ENCODE measurements at regions of chr12 and their contacts with region 1.

Region 1: GRCh38 chr12:57213058-57213715 is 3.4 kb upstream of the NXPH4 start:
- DNase-seq: peak; percentile 42
- H3K4me3 ChIP-seq: no peak overlapping the region
- H3K27me3 ChIP-seq: peaks cover 4% of the 10 kb centered on the region; the same call in 1 of the 2 replicates
- CTCF ChIP-seq: peak; percentile 97

Region 2: DNA sequence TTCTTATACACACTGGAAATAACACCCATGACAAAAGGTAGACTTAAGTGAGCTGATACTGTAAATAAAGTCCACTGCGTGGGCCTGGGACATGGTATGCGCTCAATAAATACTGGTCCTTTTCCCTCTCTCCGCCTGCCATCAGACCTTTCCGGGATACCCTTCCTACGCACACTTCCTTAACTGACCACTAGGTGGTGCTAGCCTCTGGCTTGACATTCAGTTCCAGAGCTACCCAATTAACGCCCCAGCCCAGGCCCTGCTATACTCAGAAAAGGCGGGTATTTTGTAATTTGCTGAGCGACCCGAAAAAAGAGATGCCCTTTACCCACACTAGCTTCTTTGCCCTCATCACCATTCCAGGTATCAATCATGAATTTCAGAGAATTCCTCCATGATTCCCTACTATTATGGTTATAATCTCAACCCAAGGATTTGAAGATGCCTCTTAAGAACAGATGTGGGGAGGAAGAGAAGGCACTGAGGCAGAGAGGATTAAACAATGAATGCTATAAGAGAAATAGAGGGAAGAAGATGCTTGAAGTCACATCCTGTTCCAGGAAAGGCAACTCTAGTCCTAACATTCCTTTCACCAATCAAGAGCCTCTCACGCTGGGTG is 88.8 kb before region 1 on chr12:
- CTCF ChIA-PET with region 1: interaction called, 21 read pairs
- POLR2A ChIA-PET with region 1: no interaction called
- DNase-seq: no peak
- H3K4me3 ChIP-seq: no peak overlapping the region
- H3K27me3 ChIP-seq: no peaks in the 10 kb centered on the region
- CTCF ChIP-seq: peak; percentile 97

Region 3: GRCh38 chr12:57157588-57158173 is 55.5 kb before region 1 on chr12:
- CTCF ChIA-PET with region 1: no interaction called
- POLR2A ChIA-PET with region 1: no interaction called
- DNase-seq: no peak
- H3K4me3 ChIP-seq: no peak overlapping the region
- H3K27me3 ChIP-seq: no peaks in the 10 kb centered on the region
- CTCF ChIP-seq: no peak

Region 4: GRCh38 chr12:57175428-57176138 is 37.6 kb before region 1 on chr12:
- CTCF ChIA-PET with region 1: interaction called, 17 read pairs
- POLR2A ChIA-PET with region 1: interaction called, 3 read pairs
- DNase-seq: no peak
- H3K4me3 ChIP-seq: no peak overlapping the region
- H3K27me3 ChIP-seq: no peaks in the 10 kb centered on the region
- CTCF ChIP-seq: peak; percentile 89

Region 5: DNA sequence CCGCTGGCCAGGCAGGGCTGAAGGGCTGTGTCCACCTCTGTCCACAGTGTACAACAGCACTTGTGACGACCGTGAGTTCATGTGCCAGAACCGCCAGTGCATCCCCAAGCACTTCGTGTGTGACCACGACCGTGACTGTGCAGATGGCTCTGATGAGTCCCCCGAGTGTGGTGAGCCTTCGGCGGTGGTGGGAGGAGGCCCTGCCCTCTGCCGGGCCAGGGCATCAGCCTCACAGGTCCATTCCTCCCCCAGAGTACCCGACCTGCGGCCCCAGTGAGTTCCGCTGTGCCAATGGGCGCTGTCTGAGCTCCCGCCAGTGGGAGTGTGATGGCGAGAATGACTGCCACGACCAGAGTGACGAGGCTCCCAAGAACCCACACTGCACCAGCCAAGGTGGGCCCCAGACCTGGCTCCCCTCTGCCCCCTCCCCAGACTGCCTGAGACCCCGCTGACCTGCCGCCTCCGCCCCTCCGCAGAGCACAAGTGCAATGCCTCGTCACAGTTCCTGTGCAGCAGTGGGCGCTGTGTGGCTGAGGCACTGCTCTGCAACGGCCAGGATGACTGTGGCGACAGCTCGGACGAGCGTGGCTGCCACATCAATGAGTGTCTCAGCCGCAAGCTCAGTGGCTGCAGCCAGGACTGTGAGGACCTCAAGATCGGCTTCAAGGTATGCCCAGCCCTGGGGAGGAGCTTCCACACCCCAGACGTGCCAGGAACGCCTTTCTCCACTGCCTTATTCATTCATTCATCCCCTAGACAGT is 17.4 kb before region 1 on chr12:
- CTCF ChIA-PET with region 1: interaction called, 33 read pairs
- POLR2A ChIA-PET with region 1: no interaction called
- DNase-seq: no peak
- H3K4me3 ChIP-seq: no peak overlapping the region
- H3K27me3 ChIP-seq: no peaks in the 10 kb centered on the region
- CTCF ChIP-seq: no peak

Region 6: DNA sequence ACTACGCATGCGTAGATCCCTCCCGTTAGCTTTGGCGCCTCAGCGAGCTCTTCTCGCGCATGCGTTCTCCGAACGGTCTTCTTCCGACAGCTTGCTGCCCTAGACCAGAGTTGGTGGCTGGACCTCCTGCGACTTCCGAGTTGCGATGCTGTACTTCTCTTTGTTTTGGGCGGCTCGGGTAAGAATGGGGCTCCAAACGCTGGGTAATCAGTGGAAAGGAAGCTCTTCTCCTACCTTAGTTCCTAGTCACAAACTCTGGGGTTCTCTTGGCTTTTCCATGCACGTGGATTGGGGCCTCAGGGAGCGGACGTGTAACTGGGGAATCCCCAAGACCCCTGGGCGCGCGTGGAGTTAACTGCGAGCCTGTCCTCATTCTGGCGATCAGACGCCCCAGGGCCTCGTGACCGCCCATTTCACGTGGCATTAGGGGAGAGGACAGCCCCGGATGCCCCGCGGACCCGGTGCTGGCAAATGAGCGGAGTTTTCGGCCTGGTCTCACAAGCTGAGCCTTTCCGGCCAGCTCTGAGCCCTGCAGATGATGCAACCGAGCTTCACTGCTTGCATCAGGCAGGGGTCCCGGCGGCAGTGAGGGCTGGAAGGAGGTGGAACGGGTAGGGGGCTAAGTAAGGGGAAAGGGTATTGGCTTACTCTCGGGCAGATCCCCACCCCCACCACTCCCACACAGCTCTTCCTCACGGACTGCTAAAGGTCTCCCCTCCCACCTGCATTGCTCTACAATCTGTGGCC is 16.6 kb after region 1 on chr12 and contains the start of gene SHMT2:
- CTCF ChIA-PET with region 1: interaction called, 135 read pairs
- POLR2A ChIA-PET with region 1: interaction called, 12 read pairs
- DNase-seq: peak; percentile 69
- H3K4me3 ChIP-seq: peak within 1 kb of the TSS; percentile 76
- H3K27me3 ChIP-seq: no peaks in the 10 kb centered on the region
- CTCF ChIP-seq: no peak
- polyA plus RNA-seq, gene SHMT2: 299 and 550 TPM in 2 replicates

Region 7: DNA sequence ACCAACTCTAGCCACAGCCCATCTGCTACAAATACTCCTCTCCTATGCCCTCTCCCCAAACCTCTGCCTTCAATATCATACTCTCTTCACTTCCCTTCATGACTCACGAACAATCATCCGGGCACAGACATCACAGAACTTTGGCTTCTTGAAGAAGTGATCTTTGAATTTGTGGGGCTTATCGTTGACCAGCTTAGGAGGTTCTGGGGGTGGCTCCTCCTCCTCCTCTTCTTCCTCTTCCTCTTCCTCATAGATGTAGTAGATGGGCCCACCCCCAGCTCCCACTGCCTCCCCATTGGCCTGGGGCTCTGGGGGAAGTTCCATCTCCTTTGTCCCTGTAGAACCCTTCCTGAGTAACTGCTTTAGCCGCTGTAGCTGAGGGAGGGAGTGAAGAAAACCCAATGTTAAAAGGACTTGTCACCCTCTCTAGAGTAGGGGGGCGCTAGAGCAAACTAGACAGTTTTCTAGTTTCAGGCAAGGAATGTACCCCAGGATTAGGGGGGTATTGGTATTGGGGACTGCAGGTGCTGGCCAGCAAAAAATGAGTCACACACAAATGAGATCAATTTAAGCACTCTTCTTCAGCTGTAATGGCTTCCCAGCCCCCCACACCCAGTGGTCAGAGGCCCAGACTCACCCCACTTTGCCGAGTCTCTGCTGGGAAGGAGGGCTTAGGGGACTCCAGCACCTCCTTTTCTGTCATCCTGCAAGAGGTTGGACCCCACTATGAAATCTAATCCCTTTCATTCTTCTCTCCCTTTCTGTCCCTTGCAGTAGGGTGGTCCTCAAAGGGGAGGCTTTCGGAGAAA is 36.0 kb after region 1 on chr12:
- CTCF ChIA-PET with region 1: interaction called, 334 read pairs
- POLR2A ChIA-PET with region 1: no interaction called
- DNase-seq: no peak
- H3K4me3 ChIP-seq: no peak overlapping the region
- H3K27me3 ChIP-seq: no peaks in the 10 kb centered on the region
- CTCF ChIP-seq: no peak

Measured in BJ (cell line).